SK-N-SH (cell line): ENCODE measurements at regions of chr13 and their contacts with region 1.

Region 1: GRCh38 chr13:109145631-109146030 is 516.2 kb downstream of the MYO16 start:
- DNase-seq: peak; percentile 79
- H3K4me3 ChIP-seq: peak overlapping the region in 1 of 2 experiments; percentile 30; a peak in 1 of 4 replicates
- H3K27ac ChIP-seq: peak overlapping the region; percentile 61 to 90; a peak in 3 of 4 replicates
- H3K4me1 ChIP-seq: peaks cover 31 to 34% of the 10 kb centered on the region in 2 experiments; a peak in 3 of 4 replicates
- H3K27me3 ChIP-seq: no peaks in the 10 kb centered on the region
- CTCF ChIP-seq: peak; percentile 93
- EP300 ChIP-seq: peak in 1 of 2 experiments; percentile 57; a peak in 2 of 4 replicates
- RAD21 ChIP-seq: peak; percentile 98

Region 2: DNA sequence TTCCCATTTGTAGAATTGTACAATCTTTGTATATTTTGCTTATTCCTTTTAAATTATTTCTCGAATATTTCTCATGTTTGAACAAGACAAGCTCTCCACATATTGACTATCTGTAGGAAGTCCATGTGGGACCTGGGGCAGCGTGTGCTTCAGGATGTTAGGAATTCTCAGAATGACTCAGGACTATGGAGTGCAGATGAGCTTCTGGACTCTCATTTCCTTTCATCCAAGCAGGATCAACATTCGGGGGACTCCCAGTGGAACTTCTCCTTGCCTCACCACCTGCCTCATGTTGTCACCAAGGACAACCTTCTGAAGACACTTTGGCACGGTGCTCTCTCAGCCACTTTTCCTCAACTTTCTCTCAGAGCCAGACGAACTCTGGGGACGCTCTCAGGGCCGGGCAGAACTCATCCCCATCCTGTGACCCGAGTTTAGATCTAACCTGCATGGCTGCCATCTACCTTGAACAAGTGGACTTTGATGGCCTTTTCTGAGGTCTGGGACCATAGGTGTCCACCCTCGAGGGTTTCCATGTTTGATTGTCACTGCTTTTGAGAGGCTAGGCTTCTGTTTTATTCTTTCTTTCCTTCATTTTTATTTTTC is 199.0 kb after region 1 on chr13:
- CTCF ChIA-PET with region 1: interaction called, 18 read pairs
- POLR2A ChIA-PET with region 1: interaction called, 4 read pairs
- DNase-seq: peak; percentile 37
- H3K4me3 ChIP-seq: no peak overlapping the region
- H3K27ac ChIP-seq: peak overlapping the region; percentile 67 to 100
- H3K4me1 ChIP-seq: peaks cover 22 to 28% of the 10 kb centered on the region in 2 experiments
- H3K27me3 ChIP-seq: no peaks in the 10 kb centered on the region
- CTCF ChIP-seq: no peak
- EP300 ChIP-seq: no peak; a peak in 1 of 4 replicates
- RAD21 ChIP-seq: no peak

Region 3: DNA sequence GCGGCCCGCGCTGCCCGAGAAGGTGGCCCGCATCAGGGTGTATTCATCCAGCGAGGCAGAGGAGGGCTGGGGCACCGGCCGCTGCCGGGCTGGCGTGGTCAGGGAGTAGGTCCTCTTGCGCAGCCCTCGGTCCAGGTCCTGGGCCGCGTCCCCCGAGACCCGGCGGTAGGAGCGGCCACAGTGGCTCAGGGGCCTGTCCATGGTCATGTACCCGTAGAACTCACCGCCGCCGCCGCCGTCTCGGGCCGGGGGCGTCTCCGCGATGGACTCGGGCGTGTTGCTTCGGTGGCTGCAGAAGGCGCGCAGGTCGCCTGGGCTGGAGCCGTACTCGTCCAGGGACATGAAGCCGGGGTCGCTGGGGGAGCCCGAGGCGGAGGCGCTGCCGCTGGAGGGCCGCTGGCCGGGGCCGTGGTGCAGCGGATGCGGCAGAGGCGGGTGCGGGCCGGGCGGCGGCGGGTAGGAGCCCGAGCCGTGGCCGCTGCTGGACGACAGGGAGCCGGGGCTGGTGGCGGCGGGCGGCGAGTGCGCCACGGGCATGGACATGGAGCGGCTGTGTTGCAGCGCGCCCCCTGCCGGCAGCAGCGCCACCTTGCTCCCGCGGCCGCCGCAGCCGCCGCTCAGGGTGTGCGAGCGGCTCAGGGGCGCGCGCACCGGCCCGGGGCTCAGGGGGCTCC is 638.7 kb after region 1 on chr13:
- CTCF ChIA-PET with region 1: interaction called, 27 read pairs
- POLR2A ChIA-PET with region 1: interaction called, 4 read pairs
- DNase-seq: peak; percentile 88
- H3K4me3 ChIP-seq: peak overlapping the region; percentile 73 to 84
- H3K27ac ChIP-seq: peak overlapping the region; percentile 64 to 96; a peak in 3 of 4 replicates
- H3K4me1 ChIP-seq: peaks cover 0 to 10% of the 10 kb centered on the region in 2 experiments; a peak in 2 of 4 replicates
- H3K27me3 ChIP-seq: no peaks in the 10 kb centered on the region
- CTCF ChIP-seq: peak; percentile 28; the same call in 1 of the 2 replicates
- EP300 ChIP-seq: 0 out of 4 replicates have a peak, but pooled peaks of 1 of the 2 experiments have one; percentile 6
- RAD21 ChIP-seq: peak; percentile 59